ENCODE measurements at regions of chr3 and their contacts with region 1.

Region 1: DNA sequence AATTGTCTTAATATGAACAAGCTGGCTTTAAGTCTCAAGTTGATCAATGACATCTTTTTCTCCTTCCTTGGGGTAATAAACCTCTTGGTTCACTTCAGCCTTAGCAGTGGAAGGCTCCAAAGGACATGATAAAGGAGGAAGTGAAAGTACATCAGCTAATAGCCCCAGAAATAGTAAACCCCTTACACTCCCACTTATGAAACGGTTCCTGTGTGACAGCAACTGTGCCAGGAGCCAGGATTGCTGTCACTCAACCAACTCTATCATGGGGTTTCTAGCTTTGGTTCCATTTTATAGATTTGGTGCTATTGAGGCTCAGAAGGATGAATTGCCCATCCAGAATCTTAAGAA is 216.7 kb downstream of the ABHD5 start:
- DNase-seq: no peak
- ATAC-seq: no peak
- H3K4me3 ChIP-seq: no peak overlapping the region
- H3K27ac ChIP-seq: no peak overlapping the region
- H3K4me1 ChIP-seq: no peaks in the 10 kb centered on the region
- H3K27me3 ChIP-seq: no peaks in the 10 kb centered on the region
- CTCF ChIP-seq: no peak

Region 2: DNA sequence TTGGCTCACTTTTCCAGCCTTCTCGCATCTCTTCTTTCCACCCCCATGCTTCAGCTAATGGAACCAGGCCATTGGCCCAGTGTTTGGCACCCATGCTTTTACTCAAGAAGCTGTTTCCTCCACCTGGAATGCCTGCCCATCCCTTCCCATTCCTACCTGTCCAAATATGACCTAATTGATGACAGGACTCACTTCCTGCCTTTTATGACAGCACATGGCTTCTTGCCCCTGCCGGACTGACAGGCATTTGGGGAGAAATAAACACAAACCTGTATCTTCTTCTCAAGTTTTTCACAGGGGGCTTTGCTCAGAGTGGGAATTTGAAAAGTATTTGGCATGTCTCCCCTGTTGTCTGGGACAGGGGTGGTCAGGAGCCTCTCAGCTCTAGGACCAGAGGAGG is 96.7 kb before region 1 on chr3:
- CTCF ChIA-PET with region 1: no interaction called
- POLR2A ChIA-PET with region 1: no interaction called
- in situ Hi-C with region 1: no loop called
- intact Hi-C with region 1: no loop called
- DNase-seq: no peak
- ATAC-seq: no peak
- H3K4me3 ChIP-seq: no peak overlapping the region
- H3K27ac ChIP-seq: no peak overlapping the region
- H3K4me1 ChIP-seq: no peaks in the 10 kb centered on the region
- H3K27me3 ChIP-seq: no peaks in the 10 kb centered on the region
- CTCF ChIP-seq: no peak

Region 3: DNA sequence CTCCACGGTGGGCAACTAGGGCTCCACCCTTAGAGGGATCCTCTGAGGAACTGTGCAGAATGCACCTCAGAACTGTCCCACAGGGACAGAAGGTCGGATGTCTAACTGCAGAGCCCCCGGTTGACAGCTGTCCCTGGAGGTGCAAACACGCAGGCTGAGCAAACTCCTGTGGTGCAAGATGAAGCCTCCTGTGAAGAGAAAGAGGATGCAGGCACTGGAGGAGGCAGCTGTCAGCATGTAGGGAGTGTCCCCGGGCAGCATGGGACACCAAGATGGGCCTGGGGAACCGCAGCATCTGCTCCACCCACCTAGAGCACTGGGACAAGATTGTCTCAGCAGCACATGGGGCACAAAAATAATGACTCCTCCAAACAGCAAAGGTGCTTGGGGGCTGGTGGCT is 42.1 kb after region 1 on chr3:
- CTCF ChIA-PET with region 1: no interaction called
- POLR2A ChIA-PET with region 1: interaction called, 10 read pairs
- in situ Hi-C with region 1: no loop called
- intact Hi-C with region 1: no loop called
- DNase-seq: no peak
- ATAC-seq: no peak
- H3K4me3 ChIP-seq: no peak overlapping the region
- H3K27ac ChIP-seq: no peak overlapping the region
- H3K4me1 ChIP-seq: no peaks in the 10 kb centered on the region
- H3K27me3 ChIP-seq: no peaks in the 10 kb centered on the region; the same call in 1 of the 2 replicates
- CTCF ChIP-seq: no peak

Measured in Panc1 (cell line).